ENCODE measurements at regions of chr16 and their contacts with region 1.

Region 1: DNA sequence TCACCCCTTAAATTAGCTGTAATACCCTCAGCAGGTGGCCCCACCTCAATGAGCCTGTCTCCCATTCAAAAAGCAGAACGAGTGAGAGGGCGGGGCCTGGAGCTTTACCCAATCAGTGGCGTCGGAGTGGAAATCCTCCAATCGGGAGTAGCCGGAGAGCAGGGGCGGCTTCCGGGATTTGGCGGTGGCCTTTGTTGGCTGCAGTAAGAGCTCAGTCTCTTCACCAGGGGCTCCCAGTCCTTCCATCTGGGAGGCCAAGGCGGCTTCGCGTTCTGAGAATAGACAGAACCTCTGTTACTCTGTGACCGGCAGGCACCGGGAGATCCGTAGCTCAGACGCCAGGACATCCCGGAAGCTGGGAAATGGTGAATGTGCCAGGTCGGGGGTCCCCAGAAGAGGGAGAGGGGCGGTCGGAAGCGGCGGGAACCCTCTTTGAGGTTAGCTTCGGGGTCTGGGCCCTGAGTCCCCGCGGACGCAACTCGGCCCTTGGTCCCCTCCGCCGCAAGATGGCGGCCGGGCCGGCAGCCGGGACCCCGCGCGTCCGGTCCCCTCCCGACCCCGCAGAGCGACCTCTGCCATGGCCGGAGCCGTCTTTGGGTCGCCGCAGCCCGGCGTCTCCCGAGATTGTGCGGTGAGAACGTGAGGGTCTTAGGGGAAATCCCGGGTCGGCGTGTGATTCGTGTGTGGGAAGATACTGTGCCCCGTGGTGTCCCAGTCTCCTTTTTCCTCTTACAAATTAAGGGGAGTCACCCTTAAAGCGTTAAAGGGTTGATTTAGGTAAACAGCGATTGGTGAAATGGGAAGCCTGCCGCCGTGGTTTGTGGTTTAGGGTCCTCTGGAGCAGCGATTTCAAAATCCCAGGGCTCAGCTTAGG is 160.3 kb upstream of the ZNF267 start:
- DNase-seq: peak; percentile 96
- ATAC-seq: peak; percentile 93
- H3K4me3 Mint-ChIP-seq: peak overlapping the region; percentile 98
- H3K27ac Mint-ChIP-seq: peak overlapping the region; percentile 99
- H3K4me1 Mint-ChIP-seq: peaks cover 61% of the 10 kb centered on the region
- H3K27me3 Mint-ChIP-seq: no peaks in the 10 kb centered on the region

Region 2: DNA sequence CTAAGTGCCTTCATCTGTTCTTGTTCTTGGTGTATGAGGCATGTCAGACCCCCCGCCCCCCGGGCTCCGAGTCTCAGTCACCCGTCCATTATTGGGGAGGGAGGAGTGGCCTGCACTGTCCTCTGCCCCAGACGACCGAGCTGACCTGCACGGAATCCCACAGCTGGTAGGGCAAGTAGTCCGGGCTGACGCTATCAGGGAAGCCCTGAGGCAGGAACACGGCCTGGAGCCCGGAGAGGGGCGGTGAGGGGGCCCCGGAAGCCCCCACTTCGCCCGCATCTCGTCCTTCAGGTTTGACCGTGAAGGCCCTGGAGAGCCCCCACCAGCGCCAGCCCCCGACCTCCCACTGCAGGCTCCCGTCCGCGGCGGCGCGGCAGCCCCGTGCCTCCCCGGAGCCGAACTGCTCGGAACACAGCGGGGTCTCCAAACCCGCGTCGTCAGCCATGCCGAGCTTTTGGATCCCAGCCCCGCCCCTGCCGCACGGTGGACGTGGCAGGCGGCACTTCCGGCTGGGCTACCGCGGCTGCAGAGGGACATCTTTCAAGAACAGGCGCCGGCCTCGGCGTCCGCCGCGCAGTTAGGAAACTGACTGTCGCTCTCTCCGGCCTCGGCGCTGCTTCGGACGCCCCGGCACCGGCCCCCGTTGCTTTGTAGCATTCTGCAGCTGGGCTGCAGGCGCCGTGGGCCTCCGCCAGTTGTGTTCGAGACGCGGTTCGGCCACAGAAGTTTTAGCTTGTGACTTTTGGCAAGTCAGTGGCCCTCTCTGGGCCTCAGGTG is 205.2 kb before region 1 on chr16 and contains the start of gene RUSF1:
- CTCF ChIA-PET with region 1: no interaction called
- POLR2A ChIA-PET with region 1: interaction called, 15 read pairs
- DNase-seq: peak; percentile 89
- ATAC-seq: peak; percentile 91
- H3K4me3 Mint-ChIP-seq: peak within 1 kb of the TSS; percentile 96
- H3K27ac Mint-ChIP-seq: peak within 1 kb of the TSS; percentile 94
- H3K4me1 Mint-ChIP-seq: peaks cover 47% of the 10 kb centered on the region
- H3K27me3 Mint-ChIP-seq: no peaks in the 10 kb centered on the region
- total RNA-seq, gene RUSF1: 31.7 to 32.8 TPM

Region 3: DNA sequence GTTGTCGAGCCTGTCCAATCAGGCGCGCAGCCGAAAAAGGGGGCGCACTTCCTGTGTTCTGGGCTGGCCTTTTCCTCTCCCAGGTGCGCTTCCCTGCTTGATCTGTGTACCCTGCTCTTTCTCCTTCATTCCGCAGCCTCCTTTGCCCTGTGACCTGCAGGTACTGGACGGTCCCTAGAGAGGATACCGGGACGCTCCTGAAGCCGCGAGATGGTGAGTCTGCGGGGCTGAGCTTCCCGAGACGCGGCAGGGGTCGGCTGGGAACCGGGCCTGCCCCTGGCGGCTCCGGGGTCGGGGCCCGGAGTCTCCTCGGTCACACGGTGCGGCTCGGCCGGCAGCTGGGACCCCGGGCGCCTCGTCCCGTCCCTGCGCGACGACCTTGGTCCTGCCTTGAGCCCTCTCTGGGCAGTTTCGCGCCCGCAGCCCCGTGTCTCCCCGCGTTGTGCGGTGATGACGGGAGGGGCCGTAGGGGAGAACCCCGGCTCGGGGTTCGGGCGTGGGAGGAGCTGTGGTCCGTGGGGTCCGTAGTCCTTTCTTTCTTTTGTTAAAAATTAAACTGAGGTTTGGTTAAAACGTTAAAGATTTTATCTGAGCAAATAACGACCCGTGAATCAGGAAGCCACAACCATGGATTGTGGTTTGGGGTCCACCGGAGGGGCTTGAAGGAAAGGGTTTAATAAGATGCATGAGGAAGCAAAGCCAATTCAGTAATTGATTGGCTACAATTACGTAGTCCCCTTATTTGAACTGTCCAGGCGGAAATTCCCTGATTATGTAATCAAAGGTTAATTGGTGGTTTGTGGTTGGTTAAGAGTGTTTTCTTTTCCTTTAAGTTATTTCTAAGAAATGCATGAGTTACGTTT is 12.6 kb before region 1 on chr16:
- CTCF ChIA-PET with region 1: interaction called, 21 read pairs
- POLR2A ChIA-PET with region 1: interaction called, 80 read pairs
- DNase-seq: peak; percentile 92
- ATAC-seq: peak; percentile 82
- H3K4me3 Mint-ChIP-seq: peak overlapping the region; percentile 90
- H3K27ac Mint-ChIP-seq: peak overlapping the region; percentile 92
- H3K4me1 Mint-ChIP-seq: peaks cover 38% of the 10 kb centered on the region
- H3K27me3 Mint-ChIP-seq: no peaks in the 10 kb centered on the region

Region 4: DNA sequence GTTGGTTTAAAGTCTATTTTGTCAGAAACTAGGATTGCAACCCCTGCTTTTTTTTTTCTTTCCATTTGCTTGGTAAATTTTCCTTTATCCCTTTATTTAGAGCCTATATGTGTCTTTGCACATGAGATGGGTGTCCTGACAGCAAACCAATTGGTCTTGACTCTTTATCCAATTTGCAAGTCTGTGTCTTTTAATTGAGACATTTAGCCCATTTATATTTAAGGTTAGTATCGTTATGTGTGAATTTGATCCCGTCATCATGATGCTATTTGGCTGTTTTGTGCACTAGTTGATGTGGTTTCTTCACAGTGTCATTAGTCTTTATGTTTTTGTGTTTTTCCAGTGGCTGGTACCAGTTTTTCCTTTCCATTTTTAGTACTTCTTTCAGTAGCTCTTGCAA is 32.6 kb after region 1 on chr16:
- CTCF ChIA-PET with region 1: no interaction called
- POLR2A ChIA-PET with region 1: no interaction called
- DNase-seq: no peak
- ATAC-seq: no peak
- H3K4me3 Mint-ChIP-seq: no peak overlapping the region
- H3K27ac Mint-ChIP-seq: no peak overlapping the region
- H3K4me1 Mint-ChIP-seq: no peaks in the 10 kb centered on the region
- H3K27me3 Mint-ChIP-seq: no peaks in the 10 kb centered on the region

Region 5: DNA sequence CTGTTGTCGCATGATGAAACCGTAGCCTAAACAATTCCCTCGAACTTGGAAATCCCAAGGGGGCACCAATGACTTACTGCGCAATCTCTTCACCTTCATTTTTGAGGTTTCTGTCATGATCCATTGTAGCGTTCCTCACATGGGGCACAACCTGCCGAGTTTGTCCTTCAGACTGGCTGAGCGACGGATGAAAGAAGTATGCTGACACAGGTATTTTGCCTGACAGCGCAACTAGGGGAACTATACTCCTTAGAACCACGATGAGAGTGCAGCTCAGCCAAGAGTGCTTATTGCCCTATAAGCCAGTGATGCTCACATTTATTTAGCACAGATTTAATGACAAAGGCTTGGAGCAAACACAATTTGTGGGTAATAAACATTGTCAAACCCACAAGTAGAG is 54.0 kb after region 1 on chr16:
- CTCF ChIA-PET with region 1: no interaction called
- POLR2A ChIA-PET with region 1: no interaction called
- DNase-seq: no peak
- ATAC-seq: no peak
- H3K4me3 Mint-ChIP-seq: no peak overlapping the region
- H3K27ac Mint-ChIP-seq: no peak overlapping the region
- H3K4me1 Mint-ChIP-seq: no peaks in the 10 kb centered on the region
- H3K27me3 Mint-ChIP-seq: no peaks in the 10 kb centered on the region

Region 6: GRCh38 chr16:31868691-31869167 is 155.4 kb after region 1 on chr16:
- CTCF ChIA-PET with region 1: interaction called, 23 read pairs
- POLR2A ChIA-PET with region 1: interaction called, 27 read pairs
- DNase-seq: peak; percentile 89
- ATAC-seq: peak; percentile 40
- H3K4me3 Mint-ChIP-seq: peak overlapping the region; percentile 64
- H3K27ac Mint-ChIP-seq: peak overlapping the region; percentile 82
- H3K4me1 Mint-ChIP-seq: peaks cover 65% of the 10 kb centered on the region
- H3K27me3 Mint-ChIP-seq: no peaks in the 10 kb centered on the region

Region 7: GRCh38 chr16:31873556-31874365 is 160.5 kb after region 1 on chr16 and contains the start of gene ZNF267:
- CTCF ChIA-PET with region 1: interaction called, 23 read pairs
- POLR2A ChIA-PET with region 1: interaction called, 27 read pairs
- DNase-seq: peak; percentile 96
- ATAC-seq: peak; percentile 73
- H3K4me3 Mint-ChIP-seq: peak within 1 kb of the TSS; percentile 90
- H3K27ac Mint-ChIP-seq: peak within 1 kb of the TSS; percentile 97
- H3K4me1 Mint-ChIP-seq: peaks cover 81% of the 10 kb centered on the region
- H3K27me3 Mint-ChIP-seq: no peaks in the 10 kb centered on the region
- total RNA-seq, gene ZNF267: 43.9 to 49.8 TPM

Measured in activated CD8-positive, alpha-beta T cell treated with anti-CD3 and anti-CD28 coated beads, Interleukin-2, amount 10 ng/mL, durations not matched to agents 7 days and 5 days (primary cell).